Adrenal gland (tissue), 19 donors: ENCODE measurements at regions of chr13 and their contacts with region 1.

Region 1: DNA sequence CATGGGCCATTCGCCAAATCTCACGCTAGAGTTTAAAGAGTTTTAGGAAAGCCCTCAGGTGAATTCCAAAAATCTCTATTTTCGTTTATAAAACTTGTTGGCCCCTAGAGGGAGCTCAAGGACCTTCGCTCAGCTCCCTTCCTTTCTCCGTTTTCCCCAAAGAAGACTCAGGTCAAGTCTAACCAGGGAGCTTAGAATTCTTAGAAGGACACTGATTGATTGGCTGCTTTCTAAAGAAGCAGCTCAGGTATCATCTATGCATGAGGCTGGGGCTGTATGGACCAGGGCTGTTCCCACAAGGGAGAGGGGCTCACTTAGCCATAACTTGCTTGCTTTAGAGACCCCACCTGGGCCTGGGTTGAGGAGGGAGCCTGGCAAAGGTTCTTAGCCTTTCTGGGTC is 20.5 kb downstream of the DZIP1 start:
- DNase-seq: peak in 5 of 7 donors; percentile 27 to 37 (median 34)
- H3K4me3 ChIP-seq: no peak overlapping the region
- H3K27ac ChIP-seq: no peak overlapping the region
- H3K4me1 ChIP-seq: no peaks in the 10 kb centered on the region
- H3K27me3 ChIP-seq: no peaks in the 10 kb centered on the region
- CTCF ChIP-seq: peak; percentile 49 to 72 (median 64)
- POLR2A ChIP-seq: no peak

Region 2: GRCh38 chr13:95834134-95834765 is 210.2 kb after region 1 on chr13:
- intact Hi-C with region 1: loop called (anchors 2 to 10 kb)
- DNase-seq: peak; percentile 43 to 83 (median 62)
- H3K4me3 ChIP-seq: no peak overlapping the region
- H3K27ac ChIP-seq: no peak overlapping the region
- H3K4me1 ChIP-seq: peaks cover 0 to 7% of the 10 kb centered on the region in 2 donors
- H3K27me3 ChIP-seq: no peaks in the 10 kb centered on the region
- CTCF ChIP-seq: peak; percentile 84 to 96 (median 94)
- POLR2A ChIP-seq: no peak